ENCODE measurements at regions of chr6 and their contacts with region 1.

Region 1: GRCh38 chr6:42901536-42901957 is 14.3 kb upstream of the PTCRA start:
- DNase-seq: peak; percentile 69 to 86
- ATAC-seq: peak; percentile 94 to 98 (median 96)
- H3K4me3 ChIP-seq: peak overlapping the region in 2 of 10 donors; percentile 1 to 11
- H3K27ac ChIP-seq: peak overlapping the region in 7 of 10 donors; percentile 11 to 70 (median 65)
- H3K4me1 ChIP-seq: peaks cover 0 to 34% (median 10%) of the 10 kb centered on the region in 9 donors
- H3K27me3 ChIP-seq: no peaks in the 10 kb centered on the region
- CTCF ChIP-seq: peak; percentile 89 to 95 (median 91)

Region 2: DNA sequence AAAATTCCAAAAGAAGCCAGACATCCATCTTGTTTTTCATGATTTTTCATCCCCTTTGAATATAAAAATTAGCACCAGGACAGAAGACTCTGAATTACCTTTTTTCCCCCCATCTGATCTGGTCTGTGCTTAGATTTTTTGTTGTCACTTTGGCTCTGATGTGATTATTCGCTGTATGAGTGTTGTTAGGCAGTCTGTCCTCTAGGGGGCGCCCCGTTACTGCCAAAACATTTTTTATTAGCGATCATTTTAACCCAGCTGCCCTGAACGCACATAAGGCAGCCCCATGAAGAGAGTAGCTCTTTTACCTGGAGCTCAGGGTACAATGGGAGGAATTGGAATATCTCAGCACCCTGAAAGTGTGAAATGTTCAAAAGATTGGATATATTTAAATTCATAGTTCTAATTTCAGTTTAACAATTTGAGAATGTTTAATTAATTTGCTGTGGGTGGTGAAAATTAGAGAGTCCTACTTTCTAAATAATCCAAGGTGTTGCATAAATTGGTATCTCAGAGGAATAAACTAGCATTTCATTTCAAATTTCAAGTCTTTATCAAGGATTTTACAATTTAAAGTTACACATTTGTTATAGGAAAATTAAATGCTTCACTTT is 239.9 kb before region 1 on chr6:
- intact Hi-C with region 1: loop called in 3 of 10 experiments (anchors 2 to 5 kb)
- DNase-seq: peak; percentile 68 to 81
- ATAC-seq: peak in 7 of 8 donors; percentile 61 to 90 (median 82)
- H3K4me3 ChIP-seq: no peak overlapping the region
- H3K27ac ChIP-seq: no peak overlapping the region
- H3K4me1 ChIP-seq: no peaks in the 10 kb centered on the region
- H3K27me3 ChIP-seq: no peaks in the 10 kb centered on the region
- CTCF ChIP-seq: peak; percentile 81 to 95 (median 91)

Region 3: GRCh38 chr6:42978839-42979522 is 77.4 kb after region 1 on chr6 and contains the start of gene PEX6:
- intact Hi-C with region 1: loop called in 1 of 10 experiments (anchors 10 kb)
- DNase-seq: peak; percentile 92 to 93
- ATAC-seq: peak; percentile 93 to 97 (median 96)
- H3K4me3 ChIP-seq: peak within 1 kb of the TSS; percentile 72 to 98 (median 90)
- H3K27ac ChIP-seq: peak within 1 kb of the TSS; percentile 81 to 97 (median 92)
- H3K4me1 ChIP-seq: peaks cover 7 to 54% (median 27%) of the 10 kb centered on the region in 9 donors
- H3K27me3 ChIP-seq: no peaks in the 10 kb centered on the region
- CTCF ChIP-seq: no peak
- total RNA-seq, gene PEX6: 11.2 to 32.6 (median 17.2) TPM

Region 4: DNA sequence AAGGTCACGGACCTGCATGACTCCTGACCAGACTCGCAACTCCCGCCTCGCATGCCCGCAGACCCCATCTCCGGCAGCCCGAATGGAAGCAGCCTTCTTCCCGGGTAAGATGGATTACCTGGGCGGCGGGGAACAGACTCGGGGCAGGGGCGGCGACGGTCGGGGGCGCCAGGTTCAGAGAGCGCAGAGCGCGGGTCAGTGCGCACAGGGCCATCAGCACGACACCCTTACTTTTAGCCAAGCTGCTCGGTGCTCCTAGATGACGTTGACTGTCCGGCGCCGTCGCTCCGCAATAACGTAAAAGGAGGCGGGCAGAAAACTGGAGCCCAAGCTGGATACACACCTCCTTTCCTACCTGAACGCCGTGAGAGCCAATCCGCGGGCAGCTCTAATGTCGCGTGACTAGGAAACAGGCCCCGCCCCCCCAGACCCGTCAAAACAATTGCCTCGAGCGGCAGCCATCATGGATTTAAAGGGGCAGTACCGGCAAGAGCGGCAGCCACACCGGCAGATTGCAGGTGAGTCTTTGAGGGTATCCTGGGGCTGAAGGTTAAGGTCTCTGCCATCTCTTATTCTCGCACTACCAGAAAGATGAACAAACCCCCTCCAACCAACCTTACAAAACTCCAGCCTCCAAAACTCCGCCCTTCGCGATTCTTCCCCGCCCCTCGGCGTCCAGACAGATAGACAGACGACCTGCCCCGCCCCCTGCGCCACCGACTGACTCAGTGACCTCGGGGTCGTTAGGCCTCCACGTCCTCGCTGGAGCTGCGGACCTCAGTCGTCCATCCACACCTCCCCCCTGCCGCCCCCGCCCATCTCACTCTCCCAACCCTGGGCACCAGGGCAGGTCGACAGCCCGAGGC is 157.9 kb after region 1 on chr6 and contains the starts of genes KLC4 and MRPL2:
- intact Hi-C with region 1: loop called in 1 of 10 experiments (anchors 10 kb)
- DNase-seq: peak; percentile 96 to 99
- ATAC-seq: peak; percentile 95 to 99 (median 98)
- H3K4me3 ChIP-seq: peak within 1 kb of the TSS; percentile 73 to 96 (median 85)
- H3K27ac ChIP-seq: peak within 1 kb of the TSS; percentile 72 to 97 (median 89)
- H3K4me1 ChIP-seq: peaks cover 8 to 33% (median 30%) of the 10 kb centered on the region in 9 donors
- H3K27me3 ChIP-seq: no peaks in the 10 kb centered on the region
- CTCF ChIP-seq: no peak
- total RNA-seq, gene KLC4: 26.3 to 34.2 (median 28.3) TPM
- total RNA-seq, gene MRPL2: 76.0 to 139 (median 93.5) TPM

Region 5: DNA sequence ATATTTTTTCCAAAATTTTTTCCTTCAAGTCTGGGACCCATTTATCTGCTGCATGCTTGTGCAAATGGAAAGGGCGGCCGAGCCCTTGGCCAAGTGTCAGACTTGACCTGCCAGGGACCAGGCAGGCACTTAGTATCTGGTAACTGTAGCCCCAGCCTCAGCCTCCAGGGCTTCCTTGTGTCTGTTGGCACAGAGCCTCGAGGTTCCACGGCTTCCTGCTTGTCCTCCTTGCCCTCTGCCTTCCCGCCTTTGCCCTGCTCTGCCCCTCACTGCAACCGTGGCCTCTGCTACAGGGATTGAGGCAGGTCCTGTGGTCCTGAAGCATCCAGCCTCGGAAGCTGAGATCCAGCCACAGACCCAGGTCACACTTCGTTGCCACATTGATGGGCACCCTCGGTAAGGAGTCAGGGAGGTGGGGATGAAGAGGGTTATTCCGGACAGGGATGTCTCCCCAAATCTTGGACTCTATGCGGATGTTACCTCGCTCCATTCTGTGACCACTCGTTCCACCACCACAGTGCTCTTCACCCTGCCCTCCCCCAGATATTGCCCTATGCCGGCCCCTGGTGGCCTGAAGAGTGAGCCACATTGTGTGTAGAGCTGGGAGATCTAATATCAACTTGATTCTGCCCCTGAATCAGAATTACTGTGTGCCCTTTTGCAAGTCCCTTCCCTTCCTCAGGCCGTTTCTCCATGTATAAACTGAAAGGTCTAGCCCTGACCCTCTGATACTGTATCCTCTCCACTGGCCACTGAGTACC is 228.1 kb after region 1 on chr6:
- intact Hi-C with region 1: loop called in 1 of 10 experiments (anchors 2 kb)
- DNase-seq: peak in 1 of 2 donors; percentile 35
- ATAC-seq: peak; percentile 49 to 78 (median 72)
- H3K4me3 ChIP-seq: no peak overlapping the region
- H3K27ac ChIP-seq: no peak overlapping the region
- H3K4me1 ChIP-seq: peaks cover 0 to 12% (median 0%) of the 10 kb centered on the region in 9 donors
- H3K27me3 ChIP-seq: no peaks in the 10 kb centered on the region
- CTCF ChIP-seq: peak in 8 of 9 donors; percentile 28 to 65 (median 52)

Region 6: DNA sequence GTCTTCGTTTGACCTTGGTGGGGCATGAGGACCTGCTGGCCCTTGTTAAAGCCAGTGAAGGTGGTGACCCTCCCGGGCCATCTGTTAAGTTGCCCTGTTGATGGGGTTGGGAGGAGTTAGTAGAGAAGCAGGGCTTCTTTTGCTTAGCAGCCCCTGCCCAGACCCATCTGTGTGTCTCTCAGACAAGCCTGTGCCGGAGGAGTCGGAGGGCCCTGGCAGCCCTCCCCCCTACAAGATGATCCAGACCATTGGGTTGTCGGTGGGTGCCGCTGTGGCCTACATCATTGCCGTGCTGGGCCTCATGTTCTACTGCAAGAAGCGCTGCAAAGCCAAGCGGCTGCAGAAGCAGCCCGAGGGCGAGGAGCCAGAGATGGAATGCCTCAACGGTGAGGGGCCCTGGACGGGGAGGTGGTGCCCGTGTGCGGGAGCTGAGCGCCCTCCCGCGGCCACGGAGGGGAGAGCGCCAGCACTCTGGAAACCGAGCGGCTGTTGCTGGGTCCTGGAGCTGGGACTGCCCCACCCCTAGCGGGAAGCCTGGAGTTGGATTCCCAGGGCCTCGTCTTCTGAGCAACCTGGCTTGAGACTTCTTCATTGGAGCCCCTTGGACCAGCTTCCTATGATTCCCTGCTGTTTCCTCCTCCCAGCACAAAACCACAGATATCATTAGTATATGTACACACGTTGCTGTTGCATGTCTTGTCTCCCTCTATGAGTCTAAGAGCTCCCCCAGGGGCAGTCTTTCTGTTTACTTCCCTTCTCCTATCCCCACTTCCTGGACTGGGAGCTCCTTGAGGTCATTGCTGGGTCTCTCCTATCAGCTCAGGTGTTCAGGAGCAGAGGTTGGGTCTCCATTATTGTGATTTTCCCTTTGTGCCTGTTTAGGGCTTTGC is 241.9 kb after region 1 on chr6:
- intact Hi-C with region 1: loop called (anchors 1 to 5 kb)
- DNase-seq: peak; percentile 86 to 88
- ATAC-seq: peak; percentile 94 to 98 (median 96)
- H3K4me3 ChIP-seq: peak overlapping the region in 1 of 10 donors; percentile 22
- H3K27ac ChIP-seq: peak overlapping the region in 8 of 10 donors; percentile 2 to 69 (median 44)
- H3K4me1 ChIP-seq: peaks cover 7 to 23% (median 11%) of the 10 kb centered on the region in 9 donors
- H3K27me3 ChIP-seq: no peaks in the 10 kb centered on the region
- CTCF ChIP-seq: peak; percentile 84 to 99 (median 94)

Region 7: GRCh38 chr6:43334466-43335095 is 433.0 kb after region 1 on chr6:
- intact Hi-C with region 1: loop called in 1 of 10 experiments (anchors 5 kb)
- DNase-seq: no peak
- ATAC-seq: peak in 3 of 8 donors; percentile 28 to 73 (median 37)
- H3K4me3 ChIP-seq: no peak overlapping the region
- H3K27ac ChIP-seq: peak overlapping the region in 3 of 10 donors; percentile 9 to 25 (median 23)
- H3K4me1 ChIP-seq: peaks cover 0 to 25% (median 13%) of the 10 kb centered on the region in 9 donors
- H3K27me3 ChIP-seq: no peaks in the 10 kb centered on the region
- CTCF ChIP-seq: peak; percentile 24 to 63 (median 53)